Activated B cell treated with CpG ODN at 0.5 μM for 24 hours (primary cell): ENCODE measurements at regions of chr16 and their contacts with region 1.

Region 1: GRCh38 chr16:29694384-29695195 is 15.6 kb downstream of the QPRT start:
- DNase-seq: no peak
- ATAC-seq: no peak
- H3K4me3 Mint-ChIP-seq: no peak overlapping the region
- H3K27ac Mint-ChIP-seq: no peak overlapping the region
- H3K4me1 Mint-ChIP-seq: peaks cover 13% of the 10 kb centered on the region
- H3K27me3 Mint-ChIP-seq: no peaks in the 10 kb centered on the region
- CTCF ChIP-seq: no peak

Region 2: DNA sequence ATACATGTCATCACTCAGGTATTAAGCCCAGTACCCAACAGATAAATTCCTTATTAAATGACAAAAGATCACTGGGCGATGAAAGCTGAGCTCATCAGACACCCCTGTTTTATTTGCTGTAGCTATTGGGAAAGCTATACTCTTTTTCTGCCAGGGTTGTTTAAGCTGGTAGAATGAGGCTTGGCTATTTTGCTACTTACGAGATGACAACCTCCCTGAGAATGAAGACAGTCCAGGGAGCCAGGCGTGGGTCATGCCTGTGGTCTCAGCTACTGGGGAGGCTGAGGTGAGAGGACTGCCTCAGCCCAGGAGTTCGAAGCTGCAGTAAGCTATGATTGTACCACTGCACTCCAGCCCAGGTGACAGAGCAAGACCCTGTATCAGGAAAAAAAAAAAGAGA is 835.3 kb before region 1 on chr16:
- CTCF ChIA-PET with region 1: no interaction called
- POLR2A ChIA-PET with region 1: no interaction called
- intact Hi-C with region 1: no loop called
- DNase-seq: no peak
- ATAC-seq: no peak
- H3K4me3 Mint-ChIP-seq: no peak overlapping the region
- H3K27ac Mint-ChIP-seq: no peak overlapping the region
- H3K4me1 Mint-ChIP-seq: peaks cover 8% of the 10 kb centered on the region
- H3K27me3 Mint-ChIP-seq: no peaks in the 10 kb centered on the region
- CTCF ChIP-seq: no peak

Region 3: DNA sequence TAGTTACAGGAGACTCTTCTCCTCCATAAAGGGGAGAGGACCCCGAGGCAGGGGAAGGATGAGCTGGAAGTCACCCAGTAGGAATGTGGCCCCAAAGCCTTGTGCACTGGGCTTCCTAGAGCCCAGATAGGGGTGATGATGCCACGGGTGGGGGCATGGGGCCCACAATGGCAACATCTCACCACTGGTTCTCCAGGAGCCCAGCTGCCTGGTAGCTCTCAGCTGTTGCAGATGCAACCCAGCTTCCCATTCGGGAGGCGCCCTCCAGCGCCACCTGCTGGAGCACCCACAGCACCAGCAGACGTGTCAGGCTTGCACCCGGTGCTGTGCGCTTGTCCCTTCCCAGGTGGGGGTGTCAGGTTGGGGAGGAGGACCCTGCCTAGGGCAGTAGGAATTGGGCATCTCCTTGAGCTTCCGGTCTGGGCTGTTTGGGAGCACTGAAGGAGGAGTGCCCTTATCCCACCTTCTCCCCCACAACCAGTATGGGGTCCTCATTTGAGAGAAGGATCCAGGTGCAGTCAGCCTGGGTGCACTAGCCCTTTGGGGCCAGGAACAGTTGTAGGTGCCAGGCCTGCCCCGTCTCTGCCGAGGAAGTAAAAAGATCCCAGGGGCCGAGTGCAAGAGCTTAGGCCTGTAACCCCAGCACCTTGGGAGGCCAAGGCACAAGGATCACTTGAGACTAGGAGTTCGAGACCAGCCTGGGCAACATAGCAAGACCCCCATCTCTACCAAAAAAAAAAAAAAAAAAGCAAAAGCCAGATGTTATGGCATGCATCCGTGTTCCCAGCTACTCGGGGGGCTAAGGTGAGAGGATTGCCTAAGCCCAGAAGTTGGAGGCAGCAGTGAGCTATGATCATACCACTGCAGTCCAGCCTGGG is 154.1 kb after region 1 on chr16:
- CTCF ChIA-PET with region 1: interaction called, 21 read pairs
- POLR2A ChIA-PET with region 1: no interaction called
- intact Hi-C with region 1: loop called (anchors 1 kb)
- DNase-seq: peak; percentile 60
- ATAC-seq: peak; percentile 82
- H3K4me3 Mint-ChIP-seq: no peak overlapping the region
- H3K27ac Mint-ChIP-seq: no peak overlapping the region
- H3K4me1 Mint-ChIP-seq: no peaks in the 10 kb centered on the region
- H3K27me3 Mint-ChIP-seq: no peaks in the 10 kb centered on the region
- CTCF ChIP-seq: peak; percentile 52

Region 4: GRCh38 chr16:30005341-30006094 is 310.9 kb after region 1 on chr16:
- CTCF ChIA-PET with region 1: interaction called, 6 read pairs
- POLR2A ChIA-PET with region 1: no interaction called
- intact Hi-C with region 1: loop called (anchors 1 kb)
- DNase-seq: peak; percentile 31
- ATAC-seq: peak; percentile 81
- H3K4me3 Mint-ChIP-seq: no peak overlapping the region
- H3K27ac Mint-ChIP-seq: no peak overlapping the region
- H3K4me1 Mint-ChIP-seq: peaks cover 10% of the 10 kb centered on the region
- H3K27me3 Mint-ChIP-seq: peaks cover 11% of the 10 kb centered on the region
- CTCF ChIP-seq: peak; percentile 30

Region 5: DNA sequence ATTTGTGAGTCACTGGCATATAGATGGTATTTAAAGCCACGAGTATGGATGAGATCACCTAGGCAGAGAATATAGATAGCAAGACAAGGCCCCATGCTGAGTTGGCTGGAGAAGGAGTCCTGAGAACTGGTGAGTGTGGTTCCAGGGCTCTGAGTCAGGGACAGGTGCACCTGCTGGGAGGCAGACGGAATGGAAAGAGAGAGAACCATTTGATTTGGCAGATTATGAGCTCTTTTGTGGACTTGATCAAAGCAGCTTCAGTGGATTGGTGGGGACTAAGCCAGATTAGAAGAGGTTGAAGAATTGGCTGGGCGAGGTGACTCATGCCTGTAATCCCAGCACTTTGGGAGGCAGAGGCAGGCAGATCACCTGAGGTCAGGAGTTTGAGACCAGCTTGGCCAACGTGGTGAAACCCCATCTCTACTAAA is 324.2 kb after region 1 on chr16:
- CTCF ChIA-PET with region 1: interaction called, 3 read pairs
- POLR2A ChIA-PET with region 1: interaction called, 3 read pairs
- intact Hi-C with region 1: loop called (anchors 1 kb)
- DNase-seq: no peak
- ATAC-seq: no peak
- H3K4me3 Mint-ChIP-seq: no peak overlapping the region
- H3K27ac Mint-ChIP-seq: no peak overlapping the region
- H3K4me1 Mint-ChIP-seq: peaks cover 11% of the 10 kb centered on the region
- H3K27me3 Mint-ChIP-seq: no peaks in the 10 kb centered on the region
- CTCF ChIP-seq: no peak